Psoas muscle (tissue), 8 donors: ENCODE measurements at regions of chr16 and their contacts with region 1.

Region 1: DNA sequence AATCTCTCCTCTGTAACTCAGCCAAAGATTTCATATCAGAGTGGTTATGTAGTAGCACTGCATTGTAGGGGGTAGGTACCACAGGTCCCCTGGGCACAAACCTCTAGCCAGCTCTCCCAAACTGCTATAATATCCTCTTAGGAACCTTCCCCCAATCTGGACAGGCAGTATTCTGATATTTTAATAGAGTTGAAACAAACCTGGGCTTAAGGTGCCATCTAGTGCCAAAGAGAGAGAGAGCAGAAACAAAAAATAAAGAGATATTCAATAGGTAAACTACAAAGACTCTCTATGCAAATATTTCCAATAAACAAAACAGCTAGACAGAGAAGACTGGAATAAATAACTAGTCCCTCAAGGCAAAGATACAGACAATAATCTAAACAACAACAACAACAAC is 1070.0 kb downstream of the CDH11 start:
- DNase-seq: no peak
- ATAC-seq: no peak
- H3K4me3 ChIP-seq: no peak overlapping the region
- H3K27ac ChIP-seq: no peak overlapping the region
- H3K4me1 ChIP-seq: no peaks in the 10 kb centered on the region
- H3K27me3 ChIP-seq: no peaks in the 10 kb centered on the region
- CTCF ChIP-seq: no peak

Region 2: GRCh38 chr16:63361032-63361624 is 690.7 kb before region 1 on chr16:
- intact Hi-C with region 1: loop called in 1 of 2 experiments (anchors 10 kb)
- DNase-seq: no peak
- ATAC-seq: no peak
- H3K4me3 ChIP-seq: no peak overlapping the region
- H3K27ac ChIP-seq: no peak overlapping the region
- H3K4me1 ChIP-seq: no peaks in the 10 kb centered on the region
- H3K27me3 ChIP-seq: no peaks in the 10 kb centered on the region
- CTCF ChIP-seq: peak; percentile 70

Region 3: GRCh38 chr16:63737633-63738032 is 314.2 kb before region 1 on chr16:
- intact Hi-C with region 1: no loop called
- DNase-seq: no peak
- ATAC-seq: no peak
- H3K4me3 ChIP-seq: no peak overlapping the region
- H3K27ac ChIP-seq: no peak overlapping the region
- H3K4me1 ChIP-seq: no peaks in the 10 kb centered on the region
- H3K27me3 ChIP-seq: no peaks in the 10 kb centered on the region
- CTCF ChIP-seq: no peak